ENCODE measurements at regions of chr1 and their contacts with region 1.

Region 1: GRCh38 chr1:207797229-207797961 is 45.5 kb downstream of the CD46 start:
- DNase-seq: peak; percentile 53 to 78 (median 58)
- H3K4me3 ChIP-seq: no peak overlapping the region
- H3K4me3 Mint-ChIP-seq: no peak overlapping the region
- H3K27ac ChIP-seq: no peak overlapping the region
- H3K27ac Mint-ChIP-seq: peak overlapping the region in 3 of 7 donors; percentile 23 to 54 (median 26)
- H3K4me1 ChIP-seq: peaks cover 32% of the 10 kb centered on the region
- H3K4me1 Mint-ChIP-seq: peaks cover 38 to 52% (median 40%) of the 10 kb centered on the region in 4 donors
- H3K27me3 ChIP-seq: no peaks in the 10 kb centered on the region
- H3K27me3 Mint-ChIP-seq: no peaks in the 10 kb centered on the region

Region 2: DNA sequence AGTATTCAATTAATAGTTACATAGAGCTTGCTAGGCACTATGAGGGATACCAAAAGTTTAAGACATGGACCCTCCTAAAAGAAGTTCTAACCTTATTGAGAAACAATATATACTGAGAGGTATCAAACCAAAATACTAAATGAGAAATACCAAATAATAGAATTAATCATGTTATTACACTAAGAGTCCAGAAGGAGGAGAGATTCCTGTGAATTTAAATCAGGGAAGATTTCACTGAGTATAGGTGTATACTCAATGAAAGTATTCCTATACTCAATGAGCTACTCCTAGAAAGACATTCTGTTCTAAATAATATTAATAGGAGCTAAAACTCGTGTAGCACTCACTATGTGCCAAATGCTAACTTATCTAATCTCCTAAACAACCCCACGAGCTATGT is 143.1 kb before region 1 on chr1:
- CTCF ChIA-PET with region 1: interaction called, 6 read pairs
- POLR2A ChIA-PET with region 1: no interaction called
- intact Hi-C with region 1: loop called (anchors 1 kb)
- DNase-seq: no peak
- H3K4me3 ChIP-seq: no peak overlapping the region
- H3K4me3 Mint-ChIP-seq: no peak overlapping the region
- H3K27ac ChIP-seq: no peak overlapping the region
- H3K27ac Mint-ChIP-seq: no peak overlapping the region
- H3K4me1 ChIP-seq: no peaks in the 10 kb centered on the region
- H3K4me1 Mint-ChIP-seq: no peaks in the 10 kb centered on the region
- H3K27me3 ChIP-seq: no peaks in the 10 kb centered on the region
- H3K27me3 Mint-ChIP-seq: peaks cover 3 to 13% of the 10 kb centered on the region in 2 donors

Region 3: GRCh38 chr1:207751790-207752455 is 45.5 kb before region 1 on chr1 and contains the start of gene CD46:
- CTCF ChIA-PET with region 1: interaction called, 9 read pairs
- POLR2A ChIA-PET with region 1: interaction called, 3 read pairs
- intact Hi-C with region 1: loop called (anchors 5 kb)
- DNase-seq: peak; percentile 91 to 95 (median 92)
- H3K4me3 ChIP-seq: peak within 1 kb of the TSS; percentile 74 to 96
- H3K4me3 Mint-ChIP-seq: peak within 1 kb of the TSS; percentile 96 to 100 (median 100)
- H3K27ac ChIP-seq: peak within 1 kb of the TSS; percentile 79
- H3K27ac Mint-ChIP-seq: peak within 1 kb of the TSS; percentile 92 to 99 (median 98)
- H3K4me1 ChIP-seq: peaks cover 69% of the 10 kb centered on the region
- H3K4me1 Mint-ChIP-seq: peaks cover 54 to 86% (median 66%) of the 10 kb centered on the region in 4 donors
- H3K27me3 ChIP-seq: no peaks in the 10 kb centered on the region
- H3K27me3 Mint-ChIP-seq: no peaks in the 10 kb centered on the region
- total RNA-seq, gene CD46: 217 to 234 TPM

Region 4: DNA sequence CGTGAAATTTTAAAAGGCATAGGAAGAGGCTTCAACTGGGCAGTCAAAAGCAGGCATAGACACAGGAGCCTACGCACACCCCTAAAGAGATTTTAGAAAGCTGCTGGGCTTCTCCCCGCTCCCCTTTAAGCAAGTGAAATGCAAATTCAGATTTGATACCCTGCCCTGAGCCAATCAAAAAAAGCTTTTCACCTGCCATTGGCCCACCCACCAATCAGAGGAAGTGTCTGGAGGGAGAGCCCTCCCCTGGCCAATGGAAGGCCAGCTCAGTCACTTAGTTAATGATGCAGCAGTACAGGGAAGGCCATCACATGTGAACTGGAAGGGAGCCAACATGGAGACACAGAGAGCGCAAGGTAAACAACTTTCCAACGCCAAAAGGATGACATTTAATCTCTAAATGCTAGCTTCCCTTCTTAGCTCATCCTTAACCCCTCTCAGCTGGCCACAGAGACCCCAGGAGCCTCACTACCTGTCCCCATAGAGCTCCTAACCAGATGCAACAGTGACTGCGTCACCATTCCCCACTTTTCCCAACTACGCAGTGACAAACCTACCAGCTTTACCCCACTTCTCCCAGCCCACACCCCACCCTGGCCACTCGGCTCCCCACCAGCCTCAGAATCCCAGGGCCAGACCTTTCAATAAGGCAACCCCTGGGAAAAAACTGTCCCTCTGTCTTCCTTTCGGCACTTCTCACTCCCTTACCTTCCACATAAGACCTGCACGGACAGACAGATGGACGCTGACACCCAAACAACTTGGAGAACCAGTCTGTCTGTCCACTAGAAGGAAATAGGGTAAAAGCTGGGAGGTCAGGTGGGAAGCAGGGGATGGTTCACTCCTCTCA is 25.4 kb after region 1 on chr1:
- CTCF ChIA-PET with region 1: interaction called, 23 read pairs
- POLR2A ChIA-PET with region 1: interaction called, 20 read pairs
- intact Hi-C with region 1: no loop called
- DNase-seq: peak; percentile 74 to 85 (median 77)
- H3K4me3 ChIP-seq: peak overlapping the region; percentile 56 to 85
- H3K4me3 Mint-ChIP-seq: peak overlapping the region; percentile 84 to 98 (median 94)
- H3K27ac ChIP-seq: peak overlapping the region; percentile 86
- H3K27ac Mint-ChIP-seq: peak overlapping the region; percentile 95 to 100 (median 99)
- H3K4me1 ChIP-seq: peaks cover 87% of the 10 kb centered on the region
- H3K4me1 Mint-ChIP-seq: peaks cover 61 to 94% (median 79%) of the 10 kb centered on the region in 4 donors
- H3K27me3 ChIP-seq: no peaks in the 10 kb centered on the region
- H3K27me3 Mint-ChIP-seq: peaks cover 2 to 4% of the 10 kb centered on the region in 2 donors

Region 5: GRCh38 chr1:207868774-207869721 is 71.7 kb after region 1 on chr1:
- CTCF ChIA-PET with region 1: interaction called, 30 read pairs
- POLR2A ChIA-PET with region 1: interaction called, 11 read pairs
- intact Hi-C with region 1: loop called (anchors 1 kb)
- DNase-seq: peak; percentile 66 to 82 (median 78)
- H3K4me3 ChIP-seq: peak overlapping the region in 1 of 2 donors; percentile 79
- H3K4me3 Mint-ChIP-seq: peak overlapping the region; percentile 91 to 98 (median 96)
- H3K27ac ChIP-seq: peak overlapping the region; percentile 81
- H3K27ac Mint-ChIP-seq: peak overlapping the region; percentile 68 to 98 (median 94)
- H3K4me1 ChIP-seq: peaks cover 87% of the 10 kb centered on the region
- H3K4me1 Mint-ChIP-seq: peaks cover 74 to 94% (median 80%) of the 10 kb centered on the region in 4 donors
- H3K27me3 ChIP-seq: no peaks in the 10 kb centered on the region
- H3K27me3 Mint-ChIP-seq: no peaks in the 10 kb centered on the region

Region 6: GRCh38 chr1:207963427-207964194 is 166.2 kb after region 1 on chr1:
- CTCF ChIA-PET with region 1: interaction called, 27 read pairs
- POLR2A ChIA-PET with region 1: interaction called, 9 read pairs
- intact Hi-C with region 1: loop called (anchors 1 kb)
- DNase-seq: peak; percentile 66 to 85 (median 80)
- H3K4me3 ChIP-seq: peak overlapping the region; percentile 27 to 86
- H3K4me3 Mint-ChIP-seq: peak overlapping the region; percentile 81 to 93 (median 87)
- H3K27ac ChIP-seq: peak overlapping the region; percentile 48
- H3K27ac Mint-ChIP-seq: peak overlapping the region in 2 of 7 donors; percentile 17 to 33
- H3K4me1 ChIP-seq: peaks cover 21% of the 10 kb centered on the region
- H3K4me1 Mint-ChIP-seq: peaks cover 4 to 22% (median 14%) of the 10 kb centered on the region in 4 donors
- H3K27me3 ChIP-seq: peaks cover 14% of the 10 kb centered on the region
- H3K27me3 Mint-ChIP-seq: peaks cover 19 to 27% of the 10 kb centered on the region in 2 donors